Common myeloid progenitor, CD34-positive (primary cell): ENCODE measurements at regions of chr21 and their contacts with region 1.

Region 1: GRCh38 chr21:38159355-38159754 is 97.4 kb upstream of the KCNJ15 start:
- DNase-seq: peak; percentile 80 to 86 (median 81)
- H3K4me3 ChIP-seq: no peak overlapping the region
- H3K27ac ChIP-seq: no peak overlapping the region
- H3K4me1 ChIP-seq: no peaks in the 10 kb centered on the region
- H3K27me3 ChIP-seq: peaks cover 0 to 14% (median 4%) of the 10 kb centered on the region in 5 experiments

Region 2: DNA sequence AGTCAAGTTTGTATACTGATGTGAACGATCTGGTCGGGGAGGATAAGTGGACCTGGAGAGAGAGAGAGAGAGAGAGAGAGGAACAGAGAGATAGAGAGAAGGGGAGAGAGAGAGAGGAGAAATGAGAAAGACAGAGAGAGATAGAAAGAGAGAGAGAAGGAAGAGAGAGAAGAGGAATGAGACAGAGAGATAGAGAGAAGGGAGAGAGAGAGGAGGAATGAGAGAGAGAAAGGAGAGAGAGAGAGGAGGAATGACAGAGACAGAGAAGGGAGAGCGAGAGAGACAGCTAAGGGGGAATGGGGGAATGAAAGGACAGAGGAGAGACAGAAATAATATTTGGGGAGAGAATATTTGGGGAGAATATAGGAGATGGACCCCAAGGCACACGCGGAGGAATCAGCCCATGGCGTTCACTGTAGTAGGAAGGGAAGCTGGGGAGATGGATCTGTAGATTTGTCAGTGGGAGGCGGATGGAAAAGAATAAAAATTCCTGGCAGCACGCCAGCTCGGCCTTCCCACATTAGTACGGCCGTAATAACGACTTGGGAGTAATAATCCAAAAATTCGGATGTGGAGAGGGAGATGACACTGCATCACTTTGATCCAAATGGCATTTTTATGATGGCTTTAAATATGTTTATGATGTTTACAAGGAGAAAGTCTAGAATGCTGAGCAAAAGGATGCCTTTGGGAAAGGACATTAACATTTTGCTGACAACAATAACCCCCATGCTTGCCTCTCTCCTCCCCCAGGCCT is 83.3 kb before region 1 on chr21:
- CTCF ChIA-PET with region 1: no interaction called
- POLR2A ChIA-PET with region 1: no interaction called
- DNase-seq: no peak
- H3K4me3 ChIP-seq: no peak overlapping the region
- H3K27ac ChIP-seq: no peak overlapping the region
- H3K4me1 ChIP-seq: no peaks in the 10 kb centered on the region
- H3K27me3 ChIP-seq: no peaks in the 10 kb centered on the region

Region 3: DNA sequence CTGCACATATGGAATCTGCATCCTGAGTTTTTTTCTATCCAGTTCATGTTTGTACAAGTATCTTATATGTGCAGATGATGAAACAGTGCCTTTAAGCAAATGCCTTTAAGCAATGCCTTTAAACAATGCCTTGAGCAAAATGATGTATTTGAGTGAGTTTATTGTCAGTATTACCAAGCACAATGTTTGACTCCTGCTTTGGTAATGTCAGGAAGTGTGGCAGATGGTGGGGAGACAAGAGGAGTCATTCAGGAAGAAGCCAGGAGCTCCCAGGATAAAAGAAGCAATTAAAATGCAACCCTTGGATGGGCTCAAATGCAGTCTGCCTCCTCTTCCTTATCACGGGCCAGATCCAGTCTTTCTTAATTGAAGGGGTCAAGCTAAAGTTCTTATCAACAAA is 11.3 kb before region 1 on chr21:
- CTCF ChIA-PET with region 1: interaction called, 10 read pairs
- POLR2A ChIA-PET with region 1: no interaction called
- DNase-seq: no peak
- H3K4me3 ChIP-seq: no peak overlapping the region
- H3K27ac ChIP-seq: no peak overlapping the region
- H3K4me1 ChIP-seq: no peaks in the 10 kb centered on the region
- H3K27me3 ChIP-seq: peaks cover under 1 to 8% (median 3%) of the 10 kb centered on the region in 5 experiments

Region 4: GRCh38 chr21:38170280-38170679 is 10.9 kb after region 1 on chr21:
- CTCF ChIA-PET with region 1: interaction called, 26 read pairs
- POLR2A ChIA-PET with region 1: no interaction called
- DNase-seq: peak; percentile 3 to 25 (median 12)
- H3K4me3 ChIP-seq: no peak overlapping the region
- H3K27ac ChIP-seq: no peak overlapping the region
- H3K4me1 ChIP-seq: no peaks in the 10 kb centered on the region
- H3K27me3 ChIP-seq: peaks cover 0 to 9% (median 0%) of the 10 kb centered on the region in 5 experiments

Region 5: DNA sequence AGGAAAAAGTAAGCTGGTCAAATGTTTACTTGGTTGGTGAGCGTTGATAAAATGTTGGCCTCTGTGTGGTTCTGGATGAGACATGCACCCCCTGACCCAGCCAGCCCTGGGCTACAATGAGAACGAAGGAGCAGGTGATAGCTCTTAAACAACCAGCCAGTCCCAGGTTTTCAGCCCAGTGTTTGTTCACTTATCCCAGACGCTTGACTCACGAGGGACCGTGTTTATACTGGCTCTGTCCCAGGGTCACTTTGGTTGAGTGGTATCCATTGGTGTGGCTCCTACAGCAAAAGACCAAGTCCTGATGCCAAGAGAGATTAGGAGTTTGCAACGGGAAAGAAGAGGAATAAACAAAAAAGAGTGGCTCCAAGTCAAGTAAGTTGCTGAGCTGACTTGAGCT is 184.3 kb after region 1 on chr21:
- CTCF ChIA-PET with region 1: no interaction called
- POLR2A ChIA-PET with region 1: no interaction called
- DNase-seq: no peak
- H3K4me3 ChIP-seq: no peak overlapping the region
- H3K27ac ChIP-seq: no peak overlapping the region
- H3K4me1 ChIP-seq: no peaks in the 10 kb centered on the region
- H3K27me3 ChIP-seq: peaks cover 0 to 2% (median 0%) of the 10 kb centered on the region in 5 experiments